CD14-positive monocyte (primary cell): ENCODE measurements at regions of chr3 and their contacts with region 1.

Region 1: GRCh38 chr3:142447852-142448823 is at the start of gene XRN1:
- DNase-seq: peak; percentile 95 to 96 (median 95)
- H3K4me3 ChIP-seq: peak within 1 kb of the TSS; percentile 81 to 97 (median 93)
- H3K4me3 Mint-ChIP-seq: peak within 1 kb of the TSS; percentile 93 to 98
- H3K27ac ChIP-seq: peak within 1 kb of the TSS; percentile 95 to 99
- H3K27ac Mint-ChIP-seq: peak within 1 kb of the TSS; percentile 99 to 100 (median 100)
- H3K4me1 ChIP-seq: peaks cover 20 to 28% of the 10 kb centered on the region in 2 donors
- H3K4me1 Mint-ChIP-seq: peaks cover 31% of the 10 kb centered on the region
- H3K27me3 ChIP-seq: no peaks in the 10 kb centered on the region
- H3K27me3 Mint-ChIP-seq: no peaks in the 10 kb centered on the region
- CTCF ChIP-seq: no peak
- polyA plus RNA-seq, gene XRN1: 8.6 to 47.9 (median 24.3) TPM

Region 2: GRCh38 chr3:142578327-142579223 is 130.4 kb after region 1 on chr3 and contains the start of gene ATR:
- intact Hi-C with region 1: loop called (anchors 10 kb)
- DNase-seq: peak; percentile 93 to 96 (median 94)
- H3K4me3 ChIP-seq: peak within 1 kb of the TSS; percentile 57 to 97 (median 95)
- H3K4me3 Mint-ChIP-seq: peak within 1 kb of the TSS; percentile 94 to 98
- H3K27ac ChIP-seq: peak within 1 kb of the TSS; percentile 96 to 99
- H3K27ac Mint-ChIP-seq: peak within 1 kb of the TSS; percentile 97 to 99 (median 98)
- H3K4me1 ChIP-seq: peaks cover 34 to 51% of the 10 kb centered on the region in 2 donors
- H3K4me1 Mint-ChIP-seq: peaks cover 47% of the 10 kb centered on the region
- H3K27me3 ChIP-seq: no peaks in the 10 kb centered on the region
- H3K27me3 Mint-ChIP-seq: peaks cover 5 to 8% (median 5%) of the 10 kb centered on the region in 3 donors
- CTCF ChIP-seq: no peak
- polyA plus RNA-seq, gene ATR: 6.3 to 16.4 (median 6.6) TPM

Region 3: DNA sequence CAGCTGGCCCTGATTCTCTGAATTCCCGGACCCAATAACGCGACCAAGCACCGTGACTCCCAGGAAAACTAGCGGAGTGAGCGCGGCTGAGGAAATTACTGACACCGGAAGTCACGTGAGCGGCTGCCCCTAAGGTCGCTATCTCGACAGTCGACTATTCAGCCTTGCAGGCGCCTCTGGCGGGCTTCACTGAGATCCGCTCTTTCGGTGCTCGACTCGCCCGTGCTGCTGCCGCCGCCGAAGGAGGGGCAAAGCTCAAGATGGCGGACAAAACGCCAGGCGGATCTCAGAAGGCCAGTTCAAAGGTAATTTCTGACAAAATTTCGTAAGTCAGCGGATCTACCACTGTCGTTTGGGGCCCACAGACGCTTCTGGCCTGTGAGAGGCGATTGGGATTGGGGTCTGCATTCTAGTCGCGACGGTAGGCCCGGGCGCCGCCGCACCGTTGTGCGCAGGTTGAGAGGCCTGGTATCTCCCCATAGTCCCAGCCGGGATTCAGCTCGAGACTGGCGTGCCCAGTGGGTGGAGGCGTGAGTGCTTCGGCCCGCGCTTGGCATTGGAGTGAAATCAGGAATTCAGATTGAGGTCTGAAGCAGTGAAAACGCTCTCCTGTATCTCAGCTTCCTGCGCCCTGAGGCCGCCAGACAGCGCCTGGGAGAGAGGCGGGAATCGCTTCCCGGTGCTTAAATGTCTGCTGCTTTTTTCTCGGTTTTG is 553.4 kb after region 1 on chr3 and contains the start of gene U2SURP:
- intact Hi-C with region 1: loop called in 1 of 2 experiments (anchors 10 kb)
- DNase-seq: peak; percentile 92 to 99 (median 96)
- H3K4me3 ChIP-seq: peak within 1 kb of the TSS; percentile 67 to 94 (median 93)
- H3K4me3 Mint-ChIP-seq: peak within 1 kb of the TSS; percentile 94 to 98
- H3K27ac ChIP-seq: peak within 1 kb of the TSS; percentile 95 to 96
- H3K27ac Mint-ChIP-seq: peak within 1 kb of the TSS; percentile 97 to 100 (median 99)
- H3K4me1 ChIP-seq: peaks cover 18 to 24% of the 10 kb centered on the region in 2 donors
- H3K4me1 Mint-ChIP-seq: peaks cover 24% of the 10 kb centered on the region
- H3K27me3 ChIP-seq: no peaks in the 10 kb centered on the region
- H3K27me3 Mint-ChIP-seq: peaks cover 0 to 4% (median under 1%) of the 10 kb centered on the region in 3 donors
- CTCF ChIP-seq: no peak
- polyA plus RNA-seq, gene U2SURP: 21.1 to 70.4 (median 51.4) TPM